PC-9 (cell line): ENCODE measurements at regions of chr9 and their contacts with region 1.

Region 1: GRCh38 chr9:133103183-133103986 is 17.7 kb downstream of the RALGDS start:
- DNase-seq: peak; percentile 72 to 87
- H3K4me3 ChIP-seq: no peak overlapping the region
- H3K27ac ChIP-seq: no peak overlapping the region
- H3K4me1 ChIP-seq: peaks cover 12% of the 10 kb centered on the region
- H3K27me3 ChIP-seq: no peaks in the 10 kb centered on the region
- CTCF ChIP-seq: peak; percentile 99

Region 2: GRCh38 chr9:131719262-131719908 is 1384.0 kb before region 1 on chr9:
- CTCF ChIA-PET with region 1: no interaction called
- POLR2A ChIA-PET with region 1: interaction called, 10 read pairs
- intact Hi-C with region 1: no loop called
- DNase-seq: no peak
- H3K4me3 ChIP-seq: no peak overlapping the region
- H3K27ac ChIP-seq: no peak overlapping the region
- H3K4me1 ChIP-seq: no peaks in the 10 kb centered on the region
- H3K27me3 ChIP-seq: no peaks in the 10 kb centered on the region
- CTCF ChIP-seq: no peak

Region 3: GRCh38 chr9:132694157-132694556 is 409.2 kb before region 1 on chr9:
- CTCF ChIA-PET with region 1: no interaction called
- POLR2A ChIA-PET with region 1: no interaction called
- intact Hi-C with region 1: no loop called
- DNase-seq: no peak
- H3K4me3 ChIP-seq: no peak overlapping the region
- H3K27ac ChIP-seq: no peak overlapping the region
- H3K4me1 ChIP-seq: no peaks in the 10 kb centered on the region
- H3K27me3 ChIP-seq: no peaks in the 10 kb centered on the region
- CTCF ChIP-seq: peak; percentile 37; the same call in 1 of the 2 replicates

Region 4: DNA sequence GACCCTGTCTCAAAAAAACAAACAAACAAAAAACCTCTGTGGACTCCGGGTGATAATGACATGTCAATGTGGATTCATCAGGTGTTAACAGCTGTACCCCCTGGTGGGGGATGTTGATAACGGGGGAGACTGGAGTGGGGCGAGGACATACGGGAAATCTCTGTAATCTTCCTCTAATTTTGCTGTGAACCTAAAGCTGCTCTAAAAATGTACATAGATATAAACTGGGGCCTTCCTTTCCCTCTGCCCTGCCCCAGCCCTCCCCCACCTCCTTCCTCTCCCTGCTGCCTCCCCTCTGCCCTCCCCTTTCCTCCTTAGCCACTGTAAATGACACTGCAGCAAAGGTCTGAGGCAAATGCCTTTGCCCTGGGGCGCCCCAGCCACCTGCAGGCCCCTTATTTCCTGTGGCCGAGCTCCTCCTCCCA is 43.0 kb before region 1 on chr9:
- CTCF ChIA-PET with region 1: no interaction called
- POLR2A ChIA-PET with region 1: no interaction called
- intact Hi-C with region 1: no loop called
- DNase-seq: no peak
- H3K4me3 ChIP-seq: no peak overlapping the region
- H3K27ac ChIP-seq: no peak overlapping the region
- H3K4me1 ChIP-seq: no peaks in the 10 kb centered on the region
- H3K27me3 ChIP-seq: no peaks in the 10 kb centered on the region
- CTCF ChIP-seq: no peak

Region 5: DNA sequence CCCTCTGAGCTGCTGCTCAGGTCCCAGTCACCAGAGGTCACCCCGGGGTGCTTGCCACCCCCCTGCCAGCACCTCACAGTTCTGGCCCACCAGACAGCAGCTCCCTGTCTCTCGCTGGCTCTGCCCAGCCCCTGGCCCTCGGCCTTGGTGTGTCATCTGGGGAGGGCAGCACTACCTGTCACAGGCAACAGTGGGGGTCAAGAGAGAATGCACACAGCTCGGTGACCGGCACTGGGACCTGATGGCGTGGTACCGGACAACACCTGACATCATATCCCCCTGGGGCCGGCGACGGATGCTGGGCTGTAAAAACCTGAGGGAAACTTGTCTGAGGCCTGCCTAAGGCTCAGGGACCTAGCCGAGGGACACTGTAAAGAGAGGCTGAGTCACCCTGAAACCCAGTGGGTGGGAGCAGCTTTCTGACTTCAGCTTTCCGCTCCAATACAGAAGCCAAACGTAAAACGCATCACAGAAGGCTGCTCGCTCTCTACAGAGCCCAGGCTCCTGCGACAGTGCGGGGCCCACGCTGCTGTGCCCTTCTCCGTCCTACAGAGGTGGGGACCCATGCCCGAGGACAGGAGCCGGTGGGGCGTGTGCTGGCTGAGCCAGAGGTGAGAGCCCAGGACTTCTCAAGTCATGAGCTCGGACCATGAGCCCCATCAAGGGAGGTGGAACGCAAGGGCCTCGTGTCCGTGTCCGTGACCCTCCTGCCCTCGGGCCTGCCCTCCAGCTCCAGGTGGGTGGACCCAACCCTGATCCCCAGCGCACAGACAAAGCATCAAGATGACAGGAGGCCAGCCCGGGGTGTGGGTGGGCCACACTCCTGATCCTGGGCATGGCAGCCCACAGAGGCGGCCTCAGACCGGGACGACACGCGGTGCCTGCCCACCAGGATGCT is 12.3 kb after region 1 on chr9:
- CTCF ChIA-PET with region 1: interaction called, 3 read pairs
- POLR2A ChIA-PET with region 1: no interaction called
- intact Hi-C with region 1: loop called (anchors 1 kb)
- DNase-seq: no peak
- H3K4me3 ChIP-seq: no peak overlapping the region
- H3K27ac ChIP-seq: no peak overlapping the region
- H3K4me1 ChIP-seq: peaks cover 17% of the 10 kb centered on the region
- H3K27me3 ChIP-seq: no peaks in the 10 kb centered on the region
- CTCF ChIP-seq: no peak

Region 6: DNA sequence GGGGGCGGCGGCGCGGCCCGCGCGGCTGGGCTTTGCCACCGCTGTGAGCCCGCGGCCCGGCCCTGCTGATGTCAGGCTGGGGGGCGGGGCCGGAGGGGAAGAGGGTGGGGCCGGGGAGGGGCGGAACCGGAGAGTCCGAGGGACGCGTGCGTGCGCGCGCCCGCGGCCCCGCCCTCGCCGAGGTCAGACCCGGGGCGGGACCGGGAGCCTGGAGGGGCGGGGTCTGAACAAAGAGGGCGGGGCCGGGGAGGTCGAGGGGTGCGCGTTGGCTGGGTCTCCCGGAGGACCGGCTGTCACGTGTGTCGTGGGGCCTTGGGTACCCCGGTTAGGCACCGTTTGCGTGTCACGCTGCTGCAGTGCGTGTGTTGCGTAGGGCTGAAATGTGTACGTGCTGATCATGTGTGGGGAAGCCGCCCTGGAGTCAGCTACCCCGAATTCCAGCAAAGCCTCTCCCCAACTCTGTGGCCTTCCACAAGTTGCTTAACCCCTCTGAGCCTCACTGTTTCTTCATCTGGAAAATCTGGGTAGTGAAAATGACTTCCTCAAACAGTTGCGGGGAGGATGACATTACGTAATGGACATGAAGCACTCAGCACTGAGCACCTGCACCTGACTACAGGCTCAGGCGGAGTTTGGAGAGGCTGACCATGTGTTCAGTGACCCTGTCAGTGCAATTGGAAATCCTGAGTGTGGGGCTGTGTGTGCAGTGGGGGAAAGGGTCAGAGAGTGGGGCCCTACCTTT is 18.0 kb after region 1 on chr9 and contains the start of gene RALGDS:
- CTCF ChIA-PET with region 1: no interaction called
- POLR2A ChIA-PET with region 1: no interaction called
- intact Hi-C with region 1: loop called (anchors 1 kb)
- DNase-seq: peak; percentile 85 to 87
- H3K4me3 ChIP-seq: peak within 1 kb of the TSS; percentile 67
- H3K27ac ChIP-seq: peak within 1 kb of the TSS; percentile 64
- H3K4me1 ChIP-seq: peaks cover 15% of the 10 kb centered on the region
- H3K27me3 ChIP-seq: no peaks in the 10 kb centered on the region
- CTCF ChIP-seq: no peak
- total RNA-seq, gene RALGDS: 24.8 and 30.0 TPM in 2 replicates

Region 7: DNA sequence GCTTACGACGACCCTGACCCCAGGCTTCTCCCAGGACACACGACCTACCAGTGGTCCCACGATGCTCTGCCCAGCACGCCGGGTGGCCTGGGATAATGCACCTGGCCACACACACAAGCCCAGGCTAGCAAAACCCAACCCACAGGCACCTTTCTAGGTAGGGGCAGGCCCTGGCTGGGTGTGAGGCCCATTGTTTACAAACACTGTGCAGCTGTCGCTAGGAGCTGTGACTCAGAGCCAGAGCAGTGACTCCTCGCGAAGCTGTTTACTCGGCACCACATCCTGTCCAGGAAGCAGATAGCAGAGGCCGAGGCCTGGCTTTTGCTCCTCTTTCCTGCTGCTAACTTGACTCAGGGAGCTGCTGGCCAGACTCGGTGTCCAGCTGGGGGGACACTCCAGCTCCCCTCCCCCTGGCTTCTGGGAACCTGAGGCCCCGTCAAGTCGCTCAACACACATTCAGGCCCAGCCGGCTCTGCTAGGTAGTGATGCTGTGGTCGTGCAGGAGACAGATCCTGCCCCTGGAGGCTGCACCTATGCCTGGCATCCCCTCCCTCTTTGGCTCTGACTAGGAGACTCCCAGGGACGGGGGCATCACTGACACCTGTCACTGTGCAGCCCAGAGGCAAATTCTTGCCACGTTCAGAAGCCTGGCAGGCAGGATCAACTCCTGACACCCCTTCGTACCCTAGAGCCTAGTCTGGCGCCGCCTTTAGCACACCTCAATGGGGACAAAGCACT is 30.5 kb after region 1 on chr9:
- CTCF ChIA-PET with region 1: no interaction called
- POLR2A ChIA-PET with region 1: no interaction called
- intact Hi-C with region 1: loop called (anchors 1 kb)
- DNase-seq: peak; percentile 97 to 98
- H3K4me3 ChIP-seq: no peak overlapping the region; the same call in 1 of the 2 replicates
- H3K27ac ChIP-seq: peak overlapping the region; percentile 70
- H3K4me1 ChIP-seq: peaks cover 47% of the 10 kb centered on the region
- H3K27me3 ChIP-seq: no peaks in the 10 kb centered on the region
- CTCF ChIP-seq: no peak

Region 8: DNA sequence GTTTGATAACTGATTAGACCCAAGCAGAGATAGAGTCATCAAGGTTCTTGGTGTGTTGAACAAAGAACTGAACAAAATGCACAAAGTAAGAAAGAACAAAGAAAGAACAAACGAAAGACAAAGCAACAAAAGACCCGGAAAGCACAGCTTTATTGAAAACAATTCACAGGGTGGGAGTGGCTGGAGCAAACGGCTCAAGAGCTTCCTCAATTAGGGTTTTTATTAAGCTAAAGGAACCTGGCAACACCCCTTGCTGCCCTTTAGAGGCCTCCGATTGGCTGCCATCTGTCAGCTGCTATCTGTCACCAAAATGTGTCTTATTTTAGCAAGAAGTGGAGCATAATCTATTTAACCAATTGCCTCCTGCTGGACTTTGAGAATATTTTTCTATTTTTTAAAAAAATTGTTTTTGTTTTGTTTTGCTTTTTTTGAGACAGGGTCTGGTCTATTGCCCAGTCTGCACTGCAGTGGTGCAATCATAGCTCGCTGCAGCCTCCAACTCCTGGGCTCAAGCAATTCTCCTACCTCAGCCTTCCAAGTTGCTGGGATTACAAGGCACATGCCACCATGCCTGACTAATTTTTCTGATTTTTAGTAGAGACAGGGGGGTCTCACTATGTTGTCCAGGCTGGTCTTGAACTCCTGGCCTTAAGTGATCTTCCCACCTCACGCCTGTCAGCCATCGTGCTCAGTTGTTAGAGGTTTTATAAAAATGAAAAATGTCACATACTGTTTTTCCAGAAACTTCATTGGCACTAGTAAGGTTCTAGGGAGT is 179.3 kb after region 1 on chr9:
- CTCF ChIA-PET with region 1: no interaction called
- POLR2A ChIA-PET with region 1: no interaction called
- intact Hi-C with region 1: no loop called
- DNase-seq: no peak
- H3K4me3 ChIP-seq: no peak overlapping the region
- H3K27ac ChIP-seq: no peak overlapping the region
- H3K4me1 ChIP-seq: no peaks in the 10 kb centered on the region
- H3K27me3 ChIP-seq: peaks cover 56% of the 10 kb centered on the region
- CTCF ChIP-seq: no peak